ENCODE measurements at regions of chr17 and their contacts with region 1.

Region 1: DNA sequence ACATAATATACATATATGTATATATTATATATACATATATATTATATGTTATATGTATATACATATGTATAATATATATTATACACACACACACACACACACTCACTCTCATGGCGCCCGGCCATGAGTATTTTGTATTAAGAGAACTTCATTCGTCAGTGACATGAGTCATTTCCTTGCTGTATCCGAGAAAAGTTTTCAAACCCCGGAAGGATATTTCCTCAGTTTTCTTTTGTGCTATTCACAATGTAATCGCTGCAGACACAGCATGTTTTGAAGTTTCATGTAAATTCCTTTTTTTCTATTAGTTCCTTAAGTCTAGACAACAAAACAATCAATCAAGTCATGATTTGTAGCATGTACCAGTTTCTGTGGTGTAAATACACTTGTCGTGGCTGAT is 33.3 kb downstream of the OR1D5 start:
- DNase-seq: no peak
- H3K4me3 ChIP-seq: no peak overlapping the region
- H3K27ac ChIP-seq: no peak overlapping the region
- H3K4me1 ChIP-seq: no peaks in the 10 kb centered on the region
- H3K27me3 ChIP-seq: no peaks in the 10 kb centered on the region
- CTCF ChIP-seq: no peak
- POLR2A ChIP-seq: no peak

Region 2: GRCh38 chr17:4499431-4500187 is 1469.5 kb after region 1 on chr17:
- intact Hi-C with region 1: loop called (anchors 10 kb)
- DNase-seq: no peak
- H3K4me3 ChIP-seq: peak overlapping the region; percentile 48 to 62 (median 50)
- H3K27ac ChIP-seq: peak overlapping the region; percentile 10 to 35
- H3K4me1 ChIP-seq: peaks cover 0 to 6% of the 10 kb centered on the region in 2 donors
- H3K27me3 ChIP-seq: peaks cover 11 to 28% of the 10 kb centered on the region in 2 donors
- CTCF ChIP-seq: no peak
- POLR2A ChIP-seq: no peak

Measured in breast epithelium (tissue), 4 donors.